Body of pancreas (tissue), 4 donors: ENCODE measurements at regions of chr7 and their contacts with region 1.

Region 1: DNA sequence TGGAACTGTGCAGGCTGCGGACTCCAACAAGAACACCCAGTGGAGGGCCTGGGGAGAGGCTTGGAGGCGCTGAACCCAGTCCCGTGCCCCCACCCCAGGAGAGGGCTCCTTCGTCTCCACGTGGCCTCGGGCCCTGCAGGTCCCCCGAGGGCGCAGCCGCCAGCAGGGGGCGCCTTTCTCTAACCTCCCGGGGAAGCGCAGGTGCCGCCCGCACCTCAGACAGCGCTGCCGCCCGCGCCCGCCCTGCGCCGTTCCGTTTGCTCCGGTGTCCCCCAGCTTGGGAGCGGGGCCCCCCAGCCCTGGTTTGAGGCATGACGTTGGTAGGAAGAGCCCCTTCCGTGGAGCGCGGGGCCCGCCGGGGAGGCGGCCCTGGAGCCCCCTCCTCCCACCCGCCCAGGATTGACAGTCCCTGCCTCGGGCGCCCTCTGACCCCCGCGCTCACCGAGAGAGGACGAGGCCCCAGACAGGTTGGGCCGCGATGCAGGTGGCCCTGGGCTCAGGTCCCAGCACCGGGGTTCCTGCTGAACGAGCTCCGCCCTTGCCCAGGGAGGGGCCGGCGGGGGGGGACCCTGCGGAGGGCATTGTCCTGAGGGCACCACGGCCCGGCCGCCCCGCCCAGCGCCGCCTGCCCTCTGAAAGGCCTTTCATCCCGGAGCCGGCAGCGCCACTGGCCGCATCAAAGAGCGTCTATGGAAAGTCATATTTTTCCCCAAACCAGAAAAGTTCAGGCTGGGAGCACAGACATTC is 42.8 kb downstream of the FOXL3 start:
- DNase-seq: peak; percentile 89 to 95 (median 90)
- ATAC-seq: peak; percentile 89
- H3K4me3 ChIP-seq: no peak overlapping the region
- H3K27ac ChIP-seq: peak overlapping the region; percentile 70 to 86 (median 80)
- H3K4me1 ChIP-seq: peaks cover 20% of the 10 kb centered on the region
- H3K27me3 ChIP-seq: no peaks in the 10 kb centered on the region
- CTCF ChIP-seq: peak; percentile 87 to 96 (median 92)
- POLR2A ChIP-seq: peak in 2 of 3 donors; percentile 21 to 42

Region 2: DNA sequence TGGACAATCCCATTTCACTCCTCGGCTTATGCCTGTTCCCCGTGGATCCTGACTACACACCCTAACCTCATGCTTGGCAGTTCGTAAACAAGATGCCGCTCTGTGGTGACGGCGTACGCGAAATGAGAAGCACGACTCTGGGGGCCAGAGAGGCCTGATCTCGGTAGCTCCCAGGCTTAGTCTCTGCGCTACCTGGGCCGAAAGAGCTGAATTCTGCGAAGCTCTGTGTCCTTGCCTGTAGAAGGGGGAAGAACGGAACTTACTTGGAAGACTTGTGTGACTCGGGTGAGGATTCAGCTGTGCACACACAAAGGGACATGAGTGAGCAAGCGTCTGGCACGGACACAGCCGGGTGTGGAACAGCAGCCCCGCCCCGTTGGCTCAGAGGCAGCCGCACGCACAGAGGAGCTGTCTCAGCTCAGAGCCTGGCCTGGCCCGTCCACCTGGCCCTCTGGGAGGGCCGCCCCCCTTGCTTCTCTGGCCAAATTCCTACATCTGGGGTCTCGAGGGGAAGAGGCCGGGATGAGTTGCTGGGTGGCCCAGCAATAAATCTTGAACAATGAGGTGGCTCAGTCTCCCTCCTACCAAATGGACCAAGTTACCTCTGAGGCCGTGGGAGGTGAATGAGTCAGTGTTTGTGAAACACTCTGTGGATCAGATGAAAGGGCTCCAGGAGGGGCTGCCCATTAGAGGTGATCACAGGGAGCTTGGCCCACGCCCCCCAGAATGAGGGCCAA is 103.0 kb after region 1 on chr7:
- intact Hi-C with region 1: no loop called
- DNase-seq: no peak
- ATAC-seq: no peak
- H3K4me3 ChIP-seq: no peak overlapping the region
- H3K27ac ChIP-seq: no peak overlapping the region
- H3K4me1 ChIP-seq: peaks cover 3% of the 10 kb centered on the region
- H3K27me3 ChIP-seq: no peaks in the 10 kb centered on the region
- CTCF ChIP-seq: no peak
- POLR2A ChIP-seq: no peak

Region 3: GRCh38 chr7:490461-491291 is 157.9 kb after region 1 on chr7:
- intact Hi-C with region 1: loop called (anchors 10 kb)
- DNase-seq: peak in 2 of 4 donors; percentile 5 to 10
- ATAC-seq: no peak
- H3K4me3 ChIP-seq: no peak overlapping the region
- H3K27ac ChIP-seq: no peak overlapping the region
- H3K4me1 ChIP-seq: peaks cover 9% of the 10 kb centered on the region
- H3K27me3 ChIP-seq: no peaks in the 10 kb centered on the region
- CTCF ChIP-seq: no peak
- POLR2A ChIP-seq: no peak

Region 4: DNA sequence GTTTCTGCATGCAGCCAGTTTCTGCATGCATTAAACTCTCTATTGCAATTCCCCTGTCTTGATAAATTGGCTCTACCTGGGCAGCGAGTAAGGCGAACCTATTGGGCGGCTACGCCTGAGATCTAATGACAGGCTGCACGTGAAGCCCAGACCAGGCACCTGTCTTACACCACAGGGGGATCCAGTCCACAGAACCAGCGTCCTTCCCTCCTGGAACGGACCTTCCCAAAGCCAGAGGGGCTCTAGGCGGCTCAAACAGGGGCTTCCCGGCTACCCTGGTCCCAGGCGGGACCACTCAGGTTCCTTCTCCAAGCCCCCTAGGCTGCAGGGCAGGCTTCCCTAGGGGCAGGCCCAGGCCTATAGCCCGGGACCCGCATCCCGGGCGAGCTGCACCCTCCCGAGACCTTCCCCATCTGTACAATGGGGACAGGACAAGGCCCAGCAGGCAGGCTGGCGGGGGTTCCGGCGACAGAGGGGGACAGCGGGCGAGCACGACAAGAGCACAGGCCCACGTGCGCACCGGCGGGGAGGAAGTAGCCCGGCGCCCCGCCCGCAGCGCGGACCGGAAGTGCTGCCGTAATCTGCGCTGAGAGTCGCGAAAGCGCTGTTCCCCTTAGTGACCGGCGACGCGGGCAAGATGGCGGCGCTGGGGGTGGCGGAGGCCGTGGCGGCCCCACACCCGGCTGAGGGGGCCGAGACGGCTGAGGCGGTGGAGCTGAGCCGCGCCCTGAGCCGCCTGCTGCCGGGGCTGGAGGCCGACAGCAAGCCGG is 393.4 kb after region 1 on chr7 and contains the start of gene DNAAF5:
- intact Hi-C with region 1: loop called (anchors 5 kb)
- DNase-seq: peak; percentile 81 to 89 (median 87)
- ATAC-seq: peak; percentile 95
- H3K4me3 ChIP-seq: peak within 1 kb of the TSS; percentile 39 to 80
- H3K27ac ChIP-seq: peak within 1 kb of the TSS; percentile 27 to 80 (median 63)
- H3K4me1 ChIP-seq: peaks cover 25% of the 10 kb centered on the region
- H3K27me3 ChIP-seq: no peaks in the 10 kb centered on the region
- CTCF ChIP-seq: no peak
- POLR2A ChIP-seq: peak; percentile 17 to 60 (median 53)
- total RNA-seq, gene DNAAF5: 17.9 to 46.5 TPM